Endothelial cell of umbilical vein (primary cell): ENCODE measurements at regions of chr1 and their contacts with region 1.

Region 1: GRCh38 chr1:222171005-222171404 is 376.9 kb downstream of the HHIPL2 start:
- DNase-seq: no peak
- H3K4me3 ChIP-seq: no peak overlapping the region
- H3K27ac ChIP-seq: no peak overlapping the region
- H3K4me1 ChIP-seq: no peaks in the 10 kb centered on the region
- H3K27me3 ChIP-seq: no peaks in the 10 kb centered on the region
- CTCF ChIP-seq: peak; percentile 17 to 31
- POLR2A ChIP-seq: no peak

Region 2: DNA sequence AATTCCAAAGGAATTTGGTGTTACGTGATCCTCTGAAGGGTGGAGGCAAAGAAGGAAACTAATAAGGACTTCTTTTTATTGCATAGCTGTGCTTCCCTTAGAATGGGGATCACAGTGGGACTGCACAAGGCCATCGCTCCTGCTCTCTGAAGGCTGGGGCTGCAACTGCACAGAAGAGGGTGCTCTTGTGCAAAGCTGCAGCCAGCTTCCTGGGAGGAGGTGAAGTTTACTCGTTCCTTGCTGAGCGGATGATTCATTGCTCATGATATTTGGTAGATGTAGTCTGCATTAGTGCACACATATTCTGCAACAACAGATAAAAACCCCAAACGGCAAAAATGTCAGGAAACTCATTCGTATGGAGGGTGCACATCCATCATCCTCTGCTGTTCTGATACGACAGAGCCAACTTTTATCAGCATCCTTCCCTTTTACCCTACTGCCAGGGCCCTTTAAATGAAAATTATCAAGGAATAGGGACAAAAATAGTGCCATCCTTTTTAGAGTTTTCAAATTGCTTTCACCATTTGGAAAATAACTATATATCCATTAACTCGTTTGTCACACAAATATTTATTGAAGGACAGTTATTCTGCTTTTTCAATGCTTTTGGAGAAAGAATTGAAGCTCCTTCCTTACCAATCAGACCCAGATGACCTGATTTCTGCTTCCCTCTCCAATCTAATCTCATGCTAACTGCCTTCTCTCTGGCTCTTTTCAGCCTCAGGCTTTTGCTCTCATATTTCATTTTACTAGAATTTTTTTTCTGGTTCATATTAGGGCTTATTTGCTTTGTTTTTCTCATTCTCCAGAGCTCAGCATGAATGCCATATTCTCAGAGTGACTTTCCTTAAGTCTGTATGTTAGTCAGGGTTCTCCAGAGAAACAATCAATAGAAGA is 692.7 kb before region 1 on chr1:
- CTCF ChIA-PET with region 1: interaction called, 4 read pairs
- POLR2A ChIA-PET with region 1: no interaction called
- dilution Hi-C with region 1: no loop called
- intact Hi-C with region 1: loop called (anchors 1 kb)
- DNase-seq: peak; percentile 17
- H3K4me3 ChIP-seq: no peak overlapping the region
- H3K27ac ChIP-seq: no peak overlapping the region
- H3K4me1 ChIP-seq: no peaks in the 10 kb centered on the region
- H3K27me3 ChIP-seq: peaks cover 0 to 3% of the 10 kb centered on the region in 2 experiments
- CTCF ChIP-seq: peak in 1 of 2 donors; percentile 12
- POLR2A ChIP-seq: no peak

Region 3: DNA sequence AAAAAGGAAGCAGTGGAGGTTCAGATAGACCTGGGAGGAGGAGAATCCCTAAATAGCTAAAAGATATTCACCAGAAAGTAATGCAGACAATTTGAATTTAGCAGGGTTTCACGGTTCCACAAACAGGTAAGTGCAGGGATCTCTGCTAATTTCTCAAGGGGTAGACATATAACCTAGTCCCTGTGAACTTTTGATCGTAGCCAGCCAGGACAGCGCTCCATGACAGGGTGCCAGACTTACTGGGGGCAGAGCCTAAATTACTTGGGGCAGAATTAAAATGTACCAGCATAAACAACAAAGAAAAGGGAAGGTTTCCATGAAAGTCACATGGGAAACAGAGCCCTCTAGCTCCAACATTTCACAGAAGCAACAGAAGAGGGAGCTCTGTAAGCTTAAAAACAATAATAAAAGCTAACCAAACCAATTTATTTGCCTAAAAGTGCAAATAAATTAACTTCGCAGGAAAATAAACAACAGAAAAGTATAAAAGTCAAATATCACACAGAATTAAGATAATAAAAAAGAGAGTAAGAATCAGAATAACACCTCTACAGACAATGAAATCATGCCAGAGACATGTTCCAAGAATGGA is 627.4 kb before region 1 on chr1:
- CTCF ChIA-PET with region 1: interaction called, 7 read pairs
- POLR2A ChIA-PET with region 1: no interaction called
- dilution Hi-C with region 1: no loop called
- intact Hi-C with region 1: loop called (anchors 5 kb)
- DNase-seq: peak; percentile 25
- H3K4me3 ChIP-seq: no peak overlapping the region
- H3K27ac ChIP-seq: no peak overlapping the region
- H3K4me1 ChIP-seq: no peaks in the 10 kb centered on the region
- H3K27me3 ChIP-seq: peaks cover 0 to 2% of the 10 kb centered on the region in 2 experiments
- CTCF ChIP-seq: peak in 1 of 2 donors; percentile 30
- POLR2A ChIP-seq: no peak